ENCODE measurements at regions of chr17 and their contacts with region 1.

Region 1: GRCh38 chr17:39730095-39730921 is at the start of gene MIEN1:
- DNase-seq: peak; percentile 97
- total RNA-seq, gene MIEN1: 48.5 TPM

Region 2: DNA sequence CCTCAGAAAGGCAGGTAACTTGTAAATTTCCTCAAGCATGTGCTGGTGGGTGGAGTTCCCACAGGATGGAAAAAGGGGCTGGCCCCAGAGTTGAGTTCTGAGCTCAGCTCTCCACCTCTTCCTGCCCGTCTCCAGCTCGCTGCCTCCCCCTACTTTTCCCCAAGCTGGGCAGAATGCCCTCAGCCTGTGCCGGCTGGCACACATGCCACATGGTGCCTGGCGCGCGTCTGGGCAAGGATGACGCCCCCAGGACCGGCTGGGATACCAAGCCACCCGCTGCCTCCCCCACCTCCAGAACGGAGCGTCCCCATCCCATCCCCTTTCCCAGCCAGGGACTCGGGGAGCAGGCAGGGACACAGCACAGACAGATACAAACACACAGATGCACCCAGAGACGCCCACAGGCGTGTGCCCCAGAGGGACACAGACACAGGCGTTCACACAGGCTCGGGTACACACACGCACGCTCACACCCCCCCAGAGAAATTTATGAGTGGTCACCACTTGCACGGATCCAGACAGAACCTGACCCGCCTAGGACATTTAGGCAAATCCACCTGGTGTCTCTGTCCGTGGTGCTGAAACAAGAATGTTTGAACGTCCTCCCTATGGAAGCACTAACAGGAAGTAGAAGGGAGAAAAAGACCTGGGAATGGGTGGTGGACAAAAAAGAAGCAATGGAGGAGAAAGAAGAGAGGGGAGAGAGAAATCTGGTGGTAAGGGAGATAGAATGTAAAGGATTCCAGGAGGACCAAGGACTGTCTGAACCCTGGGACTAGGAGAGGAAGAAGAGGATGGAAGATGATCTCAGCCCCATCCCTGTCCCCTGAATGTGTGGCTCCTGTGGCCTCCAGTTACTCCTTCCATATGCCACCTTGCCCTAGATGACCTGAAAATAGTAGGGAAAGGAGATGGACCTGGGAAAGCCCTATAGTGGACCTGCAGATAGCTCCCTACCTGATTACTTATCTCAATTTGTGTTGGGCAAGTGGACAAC is 138.1 kb before region 1 on chr17:
- intact Hi-C with region 1: no loop called
- DNase-seq: no peak

Region 3: GRCh38 chr17:39636927-39637736 is 93.2 kb before region 1 on chr17 and contains the start of gene STARD3:
- intact Hi-C with region 1: loop called (anchors 5 kb)
- DNase-seq: peak; percentile 97
- total RNA-seq, gene STARD3: 21.9 TPM

Region 4: GRCh38 chr17:39668199-39668966 is 61.9 kb before region 1 on chr17 and contains the start of gene PNMT:
- intact Hi-C with region 1: loop called (anchors 5 kb)
- DNase-seq: no peak
- total RNA-seq, gene PNMT: 10.9 TPM

Region 5: DNA sequence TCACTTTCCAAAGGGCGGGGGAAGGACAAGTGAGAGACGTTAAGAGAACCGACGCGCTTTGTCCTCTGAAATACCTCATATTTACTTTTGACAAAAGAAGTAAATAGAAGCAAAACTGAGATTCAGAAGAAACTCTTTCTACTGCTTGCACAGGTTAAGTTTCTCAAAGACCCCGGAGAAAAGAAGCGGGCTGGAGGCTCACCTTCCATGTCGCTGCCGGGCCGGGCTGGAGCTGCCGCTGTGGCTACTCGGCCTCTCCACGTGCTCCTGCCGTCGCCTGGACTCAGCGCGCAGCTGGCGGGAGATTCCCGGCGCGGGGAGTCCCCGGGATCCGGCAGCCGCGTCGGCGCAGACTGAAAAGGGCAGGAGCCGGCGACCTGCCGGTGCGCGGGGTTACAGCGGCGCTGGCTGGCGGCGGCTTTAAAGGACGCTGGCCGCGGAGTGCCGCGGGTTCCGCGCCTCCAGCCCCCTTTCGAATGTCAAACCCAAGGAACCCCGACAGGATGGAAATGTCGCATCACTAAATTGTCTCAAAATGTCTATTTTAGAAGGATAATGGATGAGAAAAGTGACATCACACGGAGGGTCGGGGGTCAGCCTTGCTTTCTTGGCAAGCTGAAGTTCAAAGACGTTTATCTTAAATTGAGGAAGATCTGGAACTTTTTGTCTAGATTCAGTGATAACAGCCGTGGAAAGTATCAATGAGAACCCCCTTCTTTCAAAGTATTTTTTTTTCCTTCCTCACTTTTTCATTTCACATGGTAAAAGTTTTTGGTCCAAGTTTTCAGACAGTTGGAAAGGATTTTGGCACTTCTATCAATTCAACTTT is 133.8 kb after region 1 on chr17 and contains the start of gene IKZF3:
- intact Hi-C with region 1: no loop called
- DNase-seq: no peak
- total RNA-seq, gene IKZF3: 0.51 TPM